ENCODE measurements at regions of chr19 and their contacts with region 1.

Region 1: DNA sequence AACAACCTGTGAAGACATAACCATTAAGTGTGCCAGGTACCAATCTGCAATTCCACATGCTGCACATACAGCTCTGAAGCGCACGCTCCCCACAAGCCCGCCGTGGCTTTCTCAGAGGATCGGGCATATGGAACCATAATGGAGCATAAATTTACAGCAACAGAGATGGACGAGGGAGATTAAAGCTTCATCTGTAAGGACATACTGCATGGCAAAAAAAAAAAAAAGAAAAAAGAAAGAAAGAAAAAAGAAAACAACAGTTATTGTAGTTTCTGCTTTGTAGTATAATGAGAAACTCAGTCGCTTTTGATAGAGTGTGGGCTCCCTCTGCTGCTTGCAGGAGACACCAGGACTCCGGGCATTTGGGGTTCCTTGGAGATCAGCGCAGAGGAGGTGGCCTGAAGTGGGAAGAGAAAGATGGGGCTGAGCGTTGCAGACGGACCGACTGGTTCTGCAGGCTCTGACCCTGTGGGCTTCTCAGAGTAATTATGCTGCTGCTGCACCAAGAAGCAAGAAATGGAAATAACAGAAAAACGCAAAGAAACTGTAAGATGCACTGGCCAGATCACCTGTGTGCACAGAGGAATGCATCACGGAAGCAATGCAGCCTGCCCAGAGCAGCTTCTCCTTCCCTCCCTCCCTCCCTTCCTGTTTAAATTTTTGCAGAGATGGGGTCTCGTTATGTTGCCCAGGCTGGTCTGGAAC is 10.8 kb upstream of the PDCD5 start:
- DNase-seq: peak in 2 of 3 donors; percentile 25 to 61
- ATAC-seq: peak; percentile 71 to 77
- H3K4me3 ChIP-seq: no peak overlapping the region
- H3K27ac ChIP-seq: no peak overlapping the region
- H3K4me1 ChIP-seq: no peaks in the 10 kb centered on the region
- H3K27me3 ChIP-seq: no peaks in the 10 kb centered on the region

Region 2: GRCh38 chr19:32330213-32330857 is 239.9 kb before region 1 on chr19:
- intact Hi-C with region 1: loop called in 1 of 4 experiments (anchors 5 kb)
- DNase-seq: no peak
- ATAC-seq: no peak
- H3K4me3 ChIP-seq: no peak overlapping the region
- H3K27ac ChIP-seq: no peak overlapping the region
- H3K4me1 ChIP-seq: no peaks in the 10 kb centered on the region
- H3K27me3 ChIP-seq: no peaks in the 10 kb centered on the region

Region 3: GRCh38 chr19:32345261-32346207 is 224.7 kb before region 1 on chr19 and contains the start of gene ZNF507:
- intact Hi-C with region 1: loop called in 1 of 4 experiments (anchors 10 kb)
- DNase-seq: peak; percentile 86 to 95 (median 93)
- ATAC-seq: peak; percentile 98 to 99
- H3K4me3 ChIP-seq: peak within 1 kb of the TSS; percentile 92
- H3K27ac ChIP-seq: peak within 1 kb of the TSS; percentile 79
- H3K4me1 ChIP-seq: peaks cover 4% of the 10 kb centered on the region
- H3K27me3 ChIP-seq: no peaks in the 10 kb centered on the region
- total RNA-seq, gene ZNF507: 13.9 to 19.5 (median 16.0) TPM

Measured in right cardiac atrium (tissue), 5 donors.